ENCODE measurements at regions of chr6 and their contacts with region 1.

Region 1: DNA sequence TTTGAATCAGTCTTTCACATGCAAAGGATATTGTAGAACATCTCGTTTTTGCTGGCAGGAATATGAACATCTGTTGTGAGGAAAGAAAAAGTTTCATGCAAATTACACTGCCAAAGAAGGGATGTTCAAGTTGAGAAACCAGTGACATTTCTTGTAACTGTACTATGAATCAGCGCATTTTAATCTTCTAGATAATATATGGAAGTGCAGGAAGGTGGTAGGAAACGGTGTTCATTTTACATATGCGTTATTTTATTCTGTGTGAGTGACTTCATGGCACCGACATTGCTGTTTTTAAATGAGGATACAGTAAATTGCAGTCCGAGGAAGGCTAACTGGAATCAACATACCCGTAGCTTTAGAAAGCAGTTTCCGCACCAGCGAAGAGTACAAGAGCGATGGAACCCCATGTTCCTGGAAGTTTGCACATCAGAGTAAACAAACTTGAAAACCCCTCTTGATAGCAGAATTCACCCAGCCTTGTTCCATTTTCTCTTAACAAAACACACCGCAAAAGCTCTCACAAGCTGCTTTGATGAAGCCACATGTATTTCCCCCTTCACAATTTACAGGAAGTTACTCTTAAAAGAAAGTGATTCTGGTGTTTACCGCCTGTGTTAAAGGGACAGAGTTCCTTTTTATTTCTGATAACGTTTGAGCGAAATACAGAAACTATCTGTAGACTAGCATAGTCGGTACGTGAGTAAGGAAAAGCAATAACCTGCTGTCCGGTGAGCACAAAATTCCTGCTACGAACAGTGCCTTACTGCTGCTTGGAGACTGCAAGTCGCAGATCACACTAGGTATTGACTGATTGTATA is 11.5 kb downstream of the PRDM1 start:
- DNase-seq: peak; percentile 74
- H3K4me3 Mint-ChIP-seq: peak overlapping the region; percentile 77
- H3K27ac Mint-ChIP-seq: peak overlapping the region; percentile 98
- H3K4me1 Mint-ChIP-seq: peaks cover 84% of the 10 kb centered on the region
- H3K27me3 Mint-ChIP-seq: peaks cover 10% of the 10 kb centered on the region

Region 2: DNA sequence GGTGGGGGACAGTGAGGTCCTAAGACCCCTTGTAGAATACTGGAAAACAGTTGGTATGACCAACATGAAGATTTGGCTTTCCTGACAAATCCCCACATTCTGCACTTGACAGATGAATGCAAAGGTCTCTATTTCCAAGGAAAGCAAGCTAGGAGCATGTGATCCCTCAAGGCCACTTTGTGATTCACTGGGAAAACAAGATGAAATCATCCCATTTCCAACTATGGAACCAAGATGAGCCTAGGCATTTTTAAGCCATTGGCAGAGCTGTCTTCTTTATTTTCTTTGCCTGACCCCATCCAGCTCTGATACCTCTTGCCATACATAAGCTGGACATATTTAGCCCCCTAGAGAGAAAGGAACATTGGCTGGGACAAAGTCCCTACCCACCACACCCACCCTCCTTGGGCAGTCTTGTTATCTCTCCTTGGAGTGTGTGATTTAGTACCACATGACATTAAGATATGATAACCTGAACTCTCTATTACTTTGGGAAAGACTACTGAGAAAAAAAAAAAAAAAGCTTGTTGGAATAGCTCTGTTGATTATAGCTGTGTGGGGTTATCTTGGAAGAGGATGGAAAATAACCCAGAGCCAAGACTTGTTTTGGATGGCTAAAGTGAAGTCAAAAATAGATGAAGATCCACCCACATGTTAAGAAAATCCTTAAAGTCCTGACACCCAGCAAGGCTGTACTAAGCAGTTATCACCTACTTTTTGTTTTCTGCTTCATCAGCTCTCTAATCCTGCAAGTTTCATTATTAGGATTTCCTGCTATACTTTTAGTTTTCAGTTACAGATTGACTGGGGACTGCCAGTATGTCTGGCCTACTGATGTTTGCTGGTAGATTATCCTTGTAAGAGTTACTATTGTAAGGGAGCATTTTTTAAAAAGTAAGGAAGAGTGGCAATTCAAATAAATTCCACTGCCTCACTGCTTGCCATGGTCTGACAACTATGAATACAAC is 604.6 kb before region 1 on chr6:
- CTCF ChIA-PET with region 1: no interaction called
- intact Hi-C with region 1: loop called (anchors 2 kb)
- DNase-seq: peak; percentile 7
- H3K4me3 Mint-ChIP-seq: no peak overlapping the region
- H3K27ac Mint-ChIP-seq: no peak overlapping the region
- H3K4me1 Mint-ChIP-seq: peaks cover 6% of the 10 kb centered on the region
- H3K27me3 Mint-ChIP-seq: no peaks in the 10 kb centered on the region

Region 3: DNA sequence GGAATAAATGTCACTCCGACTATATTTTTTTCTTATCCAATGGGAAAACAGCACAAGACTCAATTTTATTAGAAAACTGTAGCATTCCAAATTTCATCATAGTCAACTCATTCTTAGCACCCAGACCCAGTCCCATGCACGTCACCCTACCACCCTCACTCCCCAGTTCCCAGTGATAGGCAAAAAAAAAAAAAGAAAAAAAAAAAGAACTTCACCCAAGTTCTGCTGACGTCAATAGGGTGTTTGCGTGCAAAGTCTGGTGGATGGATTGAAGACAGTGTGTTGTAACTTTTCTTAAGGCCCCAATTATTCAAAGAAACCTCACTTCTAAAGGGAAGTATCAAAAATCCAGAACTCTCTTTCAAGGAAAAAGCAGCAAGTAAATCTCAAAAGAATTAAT is 225.4 kb before region 1 on chr6:
- CTCF ChIA-PET with region 1: no interaction called
- intact Hi-C with region 1: loop called (anchors 1 kb)
- DNase-seq: no peak
- H3K4me3 Mint-ChIP-seq: no peak overlapping the region
- H3K27ac Mint-ChIP-seq: no peak overlapping the region
- H3K4me1 Mint-ChIP-seq: peaks cover 16% of the 10 kb centered on the region
- H3K27me3 Mint-ChIP-seq: peaks cover 21% of the 10 kb centered on the region

Region 4: GRCh38 chr6:105992315-105992961 is 105.2 kb before region 1 on chr6:
- CTCF ChIA-PET with region 1: no interaction called
- intact Hi-C with region 1: loop called (anchors 1 kb)
- DNase-seq: peak; percentile 90
- H3K4me3 Mint-ChIP-seq: peak overlapping the region; percentile 88
- H3K27ac Mint-ChIP-seq: peak overlapping the region; percentile 74
- H3K4me1 Mint-ChIP-seq: peaks cover 22% of the 10 kb centered on the region
- H3K27me3 Mint-ChIP-seq: peaks cover 72% of the 10 kb centered on the region

Region 5: DNA sequence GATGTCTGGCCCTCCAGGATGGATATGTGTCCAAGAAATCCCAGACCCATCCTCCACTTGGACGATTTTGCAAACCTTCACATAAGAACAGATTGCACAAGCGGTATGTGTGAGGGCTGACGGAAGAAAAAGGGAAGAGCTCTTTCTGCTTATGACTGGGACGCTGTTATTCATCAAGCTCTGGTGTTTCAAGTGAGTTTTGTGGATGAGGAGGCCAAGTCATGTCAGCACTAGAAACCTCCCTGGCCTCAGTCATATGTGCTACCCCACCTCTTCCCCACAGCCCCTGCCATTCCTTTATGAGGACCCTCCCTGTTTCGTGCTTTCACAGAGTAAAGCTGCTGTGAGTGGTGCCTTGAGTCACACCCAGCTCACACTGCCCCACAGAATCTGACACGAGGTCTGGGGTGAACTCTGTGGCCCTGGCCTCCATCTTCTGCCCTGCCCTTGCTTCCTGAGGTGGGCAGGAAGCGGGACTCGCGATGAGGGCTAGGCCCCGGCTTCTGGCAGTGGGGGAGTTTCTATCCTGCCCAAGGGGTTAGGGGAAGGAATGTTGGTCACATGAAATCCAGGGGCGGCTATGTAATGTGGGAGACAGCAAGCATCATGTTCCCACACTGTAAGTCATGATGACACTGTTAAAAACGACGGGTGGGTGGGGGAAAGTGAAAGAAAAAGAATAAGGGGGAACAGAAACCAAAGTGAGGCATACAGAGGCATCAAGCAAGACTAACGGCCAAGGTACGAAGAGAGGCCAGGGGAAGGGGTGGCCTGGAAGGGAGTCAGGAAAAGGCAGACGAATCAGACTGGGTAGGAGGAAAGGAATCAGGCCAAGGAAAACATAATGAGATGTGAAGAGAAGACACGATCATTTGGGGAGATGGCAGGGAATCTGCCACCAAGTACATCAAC is 66.6 kb after region 1 on chr6:
- CTCF ChIA-PET with region 1: interaction called, 4 read pairs
- intact Hi-C with region 1: loop called (anchors 1 kb)
- DNase-seq: peak; percentile 80
- H3K4me3 Mint-ChIP-seq: peak overlapping the region; percentile 36
- H3K27ac Mint-ChIP-seq: peak overlapping the region; percentile 78
- H3K4me1 Mint-ChIP-seq: peaks cover 35% of the 10 kb centered on the region
- H3K27me3 Mint-ChIP-seq: peaks cover 2% of the 10 kb centered on the region

Region 6: DNA sequence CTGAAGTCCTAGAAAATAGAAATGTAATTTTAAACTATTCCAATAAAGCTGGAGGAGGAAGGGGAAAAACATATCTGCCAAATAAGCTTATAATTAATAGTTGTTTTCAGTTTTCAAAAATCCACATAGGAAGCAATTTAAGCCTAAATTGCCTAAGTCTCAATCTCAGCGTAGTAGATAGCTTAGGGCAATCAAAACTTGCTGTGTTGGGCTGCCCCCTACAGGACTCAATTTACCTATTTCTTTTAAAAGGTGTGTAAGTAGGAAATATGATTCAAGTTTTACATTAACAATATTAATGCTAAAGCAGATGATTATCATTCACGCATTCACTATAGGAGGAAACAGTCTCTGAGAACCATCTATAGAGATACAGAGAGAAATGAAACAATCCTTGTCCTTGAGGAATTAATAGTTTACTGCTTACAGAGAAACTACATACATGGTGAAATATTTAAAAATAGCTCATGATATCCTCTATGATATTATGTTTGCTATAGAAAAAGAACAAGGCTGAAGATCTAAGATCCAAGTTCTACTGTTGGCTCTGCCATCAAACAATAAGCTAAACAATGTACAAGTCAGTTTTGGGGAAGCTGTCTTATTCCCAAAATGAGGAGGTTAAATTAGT is 125.8 kb after region 1 on chr6:
- CTCF ChIA-PET with region 1: interaction called, 23 read pairs
- intact Hi-C with region 1: loop called (anchors 2 kb)
- DNase-seq: peak; percentile 89
- H3K4me3 Mint-ChIP-seq: no peak overlapping the region
- H3K27ac Mint-ChIP-seq: no peak overlapping the region
- H3K4me1 Mint-ChIP-seq: peaks cover 18% of the 10 kb centered on the region
- H3K27me3 Mint-ChIP-seq: no peaks in the 10 kb centered on the region

Region 7: DNA sequence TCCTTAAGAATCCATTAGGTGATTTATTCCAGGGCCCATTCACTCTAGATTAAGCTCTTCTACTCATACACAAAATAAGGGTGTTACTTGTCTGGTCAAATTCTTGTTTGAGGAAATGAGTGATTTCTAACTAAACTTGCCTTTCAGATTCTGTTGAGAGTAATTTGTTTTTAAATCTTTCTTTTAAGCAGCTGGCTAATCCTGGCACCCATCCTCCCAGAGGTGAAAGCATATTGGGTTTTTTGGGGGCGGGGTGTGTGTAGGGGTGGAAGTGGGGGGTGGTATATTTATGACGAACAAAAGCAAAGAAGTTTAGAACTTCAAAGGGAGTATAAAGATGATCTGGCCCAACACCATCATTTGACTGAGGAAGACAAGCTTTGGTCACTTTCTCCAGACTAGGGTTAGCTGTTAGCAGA is 437.0 kb after region 1 on chr6:
- CTCF ChIA-PET with region 1: no interaction called
- intact Hi-C with region 1: loop called (anchors 1 kb)
- DNase-seq: peak; percentile 85
- H3K4me3 Mint-ChIP-seq: no peak overlapping the region
- H3K27ac Mint-ChIP-seq: peak overlapping the region; percentile 81
- H3K4me1 Mint-ChIP-seq: peaks cover 77% of the 10 kb centered on the region
- H3K27me3 Mint-ChIP-seq: no peaks in the 10 kb centered on the region